GM12878 (cell line): ENCODE measurements at regions of chr19 and their contacts with region 1.

Region 1: GRCh38 chr19:46614114-46614722 is 10.7 kb downstream of the PTGIR start:
- DNase-seq: no peak
- ATAC-seq: peak; percentile 66
- H3K4me3 ChIP-seq: no peak overlapping the region
- H3K27ac ChIP-seq: no peak overlapping the region
- H3K4me1 ChIP-seq: peaks cover 47% of the 10 kb centered on the region
- H3K27me3 ChIP-seq: no peaks in the 10 kb centered on the region
- CTCF ChIP-seq: peak; percentile 88 to 92 (median 89)
- EP300 ChIP-seq: no peak
- POLR2A ChIP-seq: no peak
- RAD21 ChIP-seq: peak; percentile 94

Region 2: DNA sequence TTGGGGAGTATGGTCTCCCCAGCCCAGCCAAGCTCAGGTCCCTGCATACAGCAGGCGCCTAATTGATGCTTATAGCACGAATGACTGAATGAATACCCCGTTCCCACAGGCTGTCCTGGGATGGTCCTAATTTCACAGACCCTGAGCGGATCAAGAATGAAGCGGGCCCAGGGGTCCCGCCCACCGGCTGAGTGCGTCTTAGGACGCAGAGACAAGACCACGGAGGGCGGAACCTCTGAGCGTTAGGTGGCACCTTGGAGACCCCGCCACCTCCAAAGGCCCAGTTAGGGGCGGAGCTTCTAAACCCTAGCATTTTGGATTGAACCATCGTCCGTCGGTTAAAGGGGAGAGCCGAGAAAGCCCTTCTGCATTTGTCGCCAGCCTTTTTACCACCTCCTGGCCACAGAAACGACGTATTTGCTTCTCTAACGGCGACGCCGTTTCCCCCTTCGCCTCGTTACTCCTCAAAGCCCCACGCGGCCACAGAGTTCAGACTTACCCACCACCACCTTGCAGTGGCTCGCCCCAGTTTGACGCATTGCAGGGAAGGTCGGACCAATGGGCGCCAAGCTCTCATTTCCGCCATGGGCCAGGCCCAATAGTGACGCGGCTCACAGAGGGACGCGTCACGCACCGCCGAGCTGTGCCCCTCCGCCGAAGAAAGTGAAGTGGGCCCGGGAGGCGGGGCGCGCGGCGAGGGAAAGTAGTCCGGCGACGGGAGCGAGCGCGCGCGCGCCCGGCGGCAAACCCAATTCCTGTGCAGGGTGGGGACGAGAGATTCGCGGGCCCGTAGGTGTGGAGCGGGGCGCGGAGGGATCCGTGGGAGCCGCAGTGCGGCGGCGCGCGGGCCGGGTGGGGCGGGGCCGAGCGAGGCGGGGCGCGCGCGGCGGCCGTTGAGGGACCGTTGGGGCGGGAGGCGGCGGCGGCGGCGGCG is 13.6 kb before region 1 on chr19:
- CTCF ChIA-PET with region 1: interaction called, 73 read pairs
- POLR2A ChIA-PET with region 1: interaction called, 72 read pairs
- RAD21 ChIA-PET with region 1: interaction called, 48 read pairs
- SMC1A ChIA-PET with region 1: interaction called, 83 read pairs
- in situ Hi-C with region 1: no loop called
- intact Hi-C with region 1: no loop called
- DNase-seq: peak; percentile 85
- ATAC-seq: peak; percentile 81
- H3K4me3 ChIP-seq: peak overlapping the region; percentile 72
- H3K27ac ChIP-seq: peak overlapping the region; percentile 98
- H3K4me1 ChIP-seq: peaks cover 12% of the 10 kb centered on the region
- H3K27me3 ChIP-seq: no peaks in the 10 kb centered on the region
- CTCF ChIP-seq: no peak
- EP300 ChIP-seq: peak in 1 of 2 experiments; percentile 17; a peak in 1 of 4 replicates
- POLR2A ChIP-seq: peak; percentile 91
- RAD21 ChIP-seq: no peak

Region 3: DNA sequence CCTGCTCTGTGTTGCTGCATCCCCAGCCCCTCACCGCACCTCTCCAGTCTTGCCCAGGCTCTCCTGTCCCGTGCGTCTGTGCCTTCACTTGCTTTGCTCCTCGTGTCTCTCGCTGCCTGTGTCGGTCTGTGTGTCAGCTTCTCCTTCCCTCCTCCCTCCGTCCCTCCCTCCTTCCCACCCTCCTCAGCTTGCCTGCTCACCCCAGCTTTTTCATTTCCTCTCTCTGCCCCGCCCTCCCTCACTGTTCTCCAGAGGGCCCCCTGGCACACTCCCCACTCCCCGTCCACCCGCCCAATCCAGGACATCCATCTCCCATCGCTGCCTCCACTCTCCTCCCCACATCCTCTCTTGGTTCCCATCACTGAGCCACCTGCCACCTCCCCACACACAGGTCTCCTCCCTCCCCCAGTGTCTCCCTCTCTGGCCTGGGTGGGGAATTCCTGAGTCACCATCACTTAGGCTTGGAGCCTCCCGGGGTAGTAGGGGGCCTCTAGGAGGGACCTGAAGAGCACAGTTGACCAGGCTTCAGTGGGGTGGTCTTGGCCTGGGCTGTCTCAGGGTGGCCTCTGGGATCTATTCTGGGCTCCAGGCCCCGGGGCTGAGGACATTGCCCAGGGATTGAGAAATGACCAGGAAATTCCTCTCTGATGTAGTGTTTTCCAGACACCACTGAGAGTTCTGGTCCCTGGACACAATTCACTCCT is 10.9 kb after region 1 on chr19 and contains the start of gene PTGIR:
- CTCF ChIA-PET with region 1: interaction called, 150 read pairs
- POLR2A ChIA-PET with region 1: interaction called, 5 read pairs
- RAD21 ChIA-PET with region 1: interaction called, 14 read pairs
- SMC1A ChIA-PET with region 1: interaction called, 6 read pairs
- in situ Hi-C with region 1: no loop called
- intact Hi-C with region 1: no loop called
- DNase-seq: no peak
- ATAC-seq: peak; percentile 70
- H3K4me3 ChIP-seq: peak within 1 kb of the TSS; percentile 71
- H3K27ac ChIP-seq: peak within 1 kb of the TSS; percentile 62
- H3K4me1 ChIP-seq: peaks cover 36% of the 10 kb centered on the region
- H3K27me3 ChIP-seq: no peaks in the 10 kb centered on the region
- CTCF ChIP-seq: no peak
- EP300 ChIP-seq: no peak
- POLR2A ChIP-seq: peak; percentile 62
- RAD21 ChIP-seq: no peak
- polyA plus RNA-seq, gene PTGIR: 0.34 to 1.5 TPM

Region 4: DNA sequence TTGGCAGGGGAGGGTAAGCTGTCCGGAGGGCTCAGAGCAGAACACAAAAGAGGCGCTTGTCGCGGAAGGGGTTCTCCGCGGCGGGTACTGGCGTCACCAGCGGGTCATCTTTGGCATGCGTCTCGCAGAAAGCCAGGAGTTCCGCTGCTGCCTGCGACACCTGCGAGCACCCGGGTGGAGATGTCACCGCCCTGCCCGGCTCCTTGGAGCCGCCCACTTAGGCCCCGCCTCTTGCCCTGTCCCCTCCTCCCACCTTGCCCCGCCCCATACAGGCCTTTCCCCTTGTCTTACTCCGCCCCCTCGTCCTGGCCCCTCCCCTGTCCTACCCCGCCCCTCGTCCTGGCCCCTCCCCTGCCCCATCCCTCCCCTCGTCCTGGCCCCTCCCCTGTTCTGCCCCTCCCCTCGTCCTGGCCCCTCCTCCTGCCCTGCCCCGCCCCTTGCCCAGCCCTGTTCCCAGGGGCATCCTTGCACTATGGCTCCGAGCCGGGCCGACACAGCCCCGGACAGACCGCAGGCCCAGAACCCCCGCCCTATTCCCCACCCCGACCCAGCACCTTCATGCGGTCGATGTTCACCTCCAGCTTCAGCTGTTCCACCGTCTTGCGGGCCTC is 19.9 kb after region 1 on chr19:
- CTCF ChIA-PET with region 1: interaction called, 150 read pairs
- POLR2A ChIA-PET with region 1: interaction called, 6 read pairs
- RAD21 ChIA-PET with region 1: interaction called, 14 read pairs
- SMC1A ChIA-PET with region 1: interaction called, 9 read pairs
- in situ Hi-C with region 1: no loop called
- intact Hi-C with region 1: no loop called
- DNase-seq: no peak
- ATAC-seq: peak; percentile 80
- H3K4me3 ChIP-seq: peak overlapping the region; percentile 63; the same call in 1 of the 2 replicates
- H3K27ac ChIP-seq: no peak overlapping the region
- H3K4me1 ChIP-seq: peaks cover 20% of the 10 kb centered on the region
- H3K27me3 ChIP-seq: peaks cover 0 to 3% of the 10 kb centered on the region in 2 experiments; a peak in 1 of 4 replicates
- CTCF ChIP-seq: no peak
- EP300 ChIP-seq: no peak
- POLR2A ChIP-seq: no peak
- RAD21 ChIP-seq: no peak

Region 5: DNA sequence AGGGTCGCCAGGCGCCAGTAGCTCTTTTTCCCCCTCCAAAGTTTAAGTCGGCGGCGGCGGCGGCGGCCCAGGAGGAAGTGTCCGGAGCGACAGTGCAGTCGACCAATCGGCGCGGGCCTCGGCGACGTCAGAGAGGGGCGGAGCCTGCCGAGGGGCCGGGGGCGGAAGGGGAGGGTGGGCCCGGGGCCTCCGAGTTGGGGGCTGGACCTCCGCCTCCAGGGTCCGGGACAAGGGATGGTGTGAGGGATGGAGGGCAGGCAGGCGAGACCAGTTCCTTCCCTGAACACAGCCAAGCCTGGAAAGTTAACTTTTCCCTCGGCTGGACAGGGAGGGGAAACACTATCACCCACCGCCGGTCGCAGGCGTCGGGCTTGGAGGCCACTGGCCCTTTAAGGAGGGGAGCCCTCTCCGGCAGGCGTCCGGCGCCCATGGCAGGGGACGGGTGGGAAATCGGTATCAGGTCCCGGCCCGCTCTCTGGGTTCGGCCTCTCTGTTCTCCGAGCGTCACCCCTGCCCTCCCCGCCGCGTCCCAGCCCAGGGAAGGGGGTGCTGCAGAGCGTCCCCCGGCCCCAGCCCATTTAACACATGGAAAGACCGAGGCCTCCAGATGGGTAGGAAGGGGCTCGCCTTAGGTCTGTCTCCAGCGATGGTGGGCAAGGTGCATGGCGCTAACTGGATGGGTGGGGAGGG is 103.0 kb after region 1 on chr19 and contains the start of gene PRKD2:
- CTCF ChIA-PET with region 1: interaction called, 8 read pairs
- POLR2A ChIA-PET with region 1: interaction called, 7 read pairs
- RAD21 ChIA-PET with region 1: interaction called, 5 read pairs
- SMC1A ChIA-PET with region 1: interaction called, 5 read pairs
- in situ Hi-C with region 1: no loop called
- intact Hi-C with region 1: loop called (anchors 5 kb)
- DNase-seq: no peak
- ATAC-seq: peak; percentile 67
- H3K4me3 ChIP-seq: peak within 1 kb of the TSS; percentile 91
- H3K27ac ChIP-seq: peak within 1 kb of the TSS; percentile 88
- H3K4me1 ChIP-seq: peaks cover 30% of the 10 kb centered on the region
- H3K27me3 ChIP-seq: no peaks in the 10 kb centered on the region
- CTCF ChIP-seq: no peak
- EP300 ChIP-seq: no peak
- POLR2A ChIP-seq: peak; percentile 72
- RAD21 ChIP-seq: no peak
- polyA plus RNA-seq, gene PRKD2: 2.3 to 11.8 TPM

Region 6: DNA sequence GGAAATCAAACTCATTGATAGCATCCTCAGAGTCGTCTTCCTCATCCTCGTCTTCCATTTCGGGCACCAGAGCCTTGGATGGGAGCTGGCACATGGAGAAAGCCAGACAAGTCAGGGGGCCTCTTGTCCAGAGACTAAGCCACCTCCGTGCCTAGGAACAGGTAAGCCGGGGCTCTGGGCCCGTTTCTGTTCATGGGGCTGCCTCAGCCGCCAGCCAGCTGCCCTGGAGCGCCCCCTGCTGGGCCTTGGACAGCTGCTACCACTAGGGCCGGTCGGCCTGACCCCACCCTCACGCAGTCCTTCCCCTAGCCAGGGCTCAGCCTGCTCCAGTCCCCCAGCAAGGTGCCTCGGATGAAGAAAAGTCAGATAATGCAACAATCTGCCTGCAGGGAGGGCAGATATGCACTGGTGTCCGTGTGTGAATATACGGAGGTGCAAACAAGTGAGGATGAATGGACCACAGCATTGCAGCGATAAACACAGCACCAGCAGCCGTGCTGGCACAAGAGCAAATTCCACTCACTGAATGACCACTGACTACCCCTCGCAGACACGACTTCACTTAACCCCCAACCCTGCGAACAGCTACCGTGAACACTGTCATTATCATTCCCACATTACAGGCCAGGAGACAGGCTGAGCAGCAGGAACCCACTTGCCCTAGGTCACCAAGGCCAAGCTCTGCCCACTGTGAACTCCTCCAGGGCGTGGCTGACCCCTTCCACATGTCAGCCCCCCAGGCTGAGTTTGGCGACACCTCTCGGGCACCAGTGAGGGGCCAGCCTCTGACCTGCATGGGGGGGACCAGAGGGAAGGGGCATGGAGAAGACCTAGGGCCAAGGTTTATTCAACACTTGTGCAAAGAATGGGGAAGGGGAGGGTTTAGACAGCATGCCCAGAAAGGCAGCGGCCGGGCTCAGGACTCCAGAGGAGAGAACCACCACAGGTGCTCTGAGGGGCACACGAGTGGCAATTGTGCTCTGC is 114.8 kb after region 1 on chr19:
- CTCF ChIA-PET with region 1: interaction called, 10 read pairs
- POLR2A ChIA-PET with region 1: no interaction called
- RAD21 ChIA-PET with region 1: no interaction called
- SMC1A ChIA-PET with region 1: interaction called, 3 read pairs
- in situ Hi-C with region 1: no loop called
- intact Hi-C with region 1: no loop called
- DNase-seq: no peak
- ATAC-seq: peak; percentile 97
- H3K4me3 ChIP-seq: no peak overlapping the region
- H3K27ac ChIP-seq: no peak overlapping the region
- H3K4me1 ChIP-seq: peaks cover 10% of the 10 kb centered on the region
- H3K27me3 ChIP-seq: no peaks in the 10 kb centered on the region
- CTCF ChIP-seq: peak; percentile 85 to 96 (median 91)
- EP300 ChIP-seq: no peak
- POLR2A ChIP-seq: peak; percentile 32
- RAD21 ChIP-seq: peak; percentile 75